ENCODE measurements at regions of chr5 and their contacts with region 1.

Region 1: GRCh38 chr5:133051580-133052332 is at the start of gene HSPA4:
- DNase-seq: peak; percentile 96 to 99 (median 98)
- H3K4me3 ChIP-seq: peak within 1 kb of the TSS; percentile 72 to 100 (median 98)
- H3K27ac ChIP-seq: peak within 1 kb of the TSS; percentile 96 to 100 (median 100)
- H3K27me3 ChIP-seq: no peaks in the 10 kb centered on the region
- CTCF ChIP-seq: peak in 15 of 56 donors; percentile 3 to 38 (median 13)
- total RNA-seq, gene HSPA4: 61.6 to 183 (median 97.3) TPM

Region 2: DNA sequence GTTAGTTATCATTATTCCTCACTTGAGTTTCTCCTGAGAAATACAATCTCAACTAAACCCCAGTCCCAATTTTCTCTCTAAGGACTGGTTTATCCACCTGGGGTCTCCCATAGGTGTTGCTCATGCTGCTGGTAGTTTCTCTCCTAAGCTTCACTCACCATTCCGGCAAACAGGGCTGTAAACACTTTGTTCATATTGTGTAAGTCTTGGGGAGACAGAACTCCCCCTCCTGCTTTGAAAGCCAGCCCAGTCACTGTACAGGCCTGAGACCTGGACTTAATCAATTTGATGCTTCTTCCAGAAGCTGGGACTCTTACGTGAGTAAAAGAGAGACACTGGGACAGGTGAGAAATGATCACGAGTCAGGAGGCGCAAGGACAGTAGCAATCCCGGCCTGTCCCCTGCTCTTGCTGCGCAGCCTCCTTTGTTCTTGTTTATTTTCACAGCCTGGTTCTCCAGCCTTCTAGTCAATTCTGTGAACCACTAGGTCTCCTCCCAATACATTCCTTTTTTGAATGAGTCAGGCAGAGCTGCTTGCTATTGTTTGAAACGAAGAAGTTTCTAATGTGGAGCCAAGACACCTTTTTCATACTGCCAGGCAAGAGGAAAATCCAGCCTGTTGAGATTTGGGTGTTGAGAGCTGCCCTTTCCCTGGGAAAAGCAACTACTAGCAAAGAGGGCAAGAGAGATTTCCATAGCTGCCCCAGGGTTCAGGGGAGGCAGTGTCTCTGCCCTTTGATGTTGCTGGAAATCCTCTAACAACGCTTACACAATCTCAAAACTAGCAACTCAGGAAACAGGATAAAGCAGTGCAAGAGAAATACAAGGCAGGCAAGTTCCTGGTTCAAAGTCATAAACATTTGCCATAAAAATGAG is 212.1 kb before region 1 on chr5:
- intact Hi-C with region 1: no loop called
- DNase-seq: no peak
- H3K4me3 ChIP-seq: no peak overlapping the region
- H3K27ac ChIP-seq: peak overlapping the region in 55 of 59 donors; percentile 11 to 89 (median 73)
- H3K27me3 ChIP-seq: no peaks in the 10 kb centered on the region
- CTCF ChIP-seq: no peak

Region 3: DNA sequence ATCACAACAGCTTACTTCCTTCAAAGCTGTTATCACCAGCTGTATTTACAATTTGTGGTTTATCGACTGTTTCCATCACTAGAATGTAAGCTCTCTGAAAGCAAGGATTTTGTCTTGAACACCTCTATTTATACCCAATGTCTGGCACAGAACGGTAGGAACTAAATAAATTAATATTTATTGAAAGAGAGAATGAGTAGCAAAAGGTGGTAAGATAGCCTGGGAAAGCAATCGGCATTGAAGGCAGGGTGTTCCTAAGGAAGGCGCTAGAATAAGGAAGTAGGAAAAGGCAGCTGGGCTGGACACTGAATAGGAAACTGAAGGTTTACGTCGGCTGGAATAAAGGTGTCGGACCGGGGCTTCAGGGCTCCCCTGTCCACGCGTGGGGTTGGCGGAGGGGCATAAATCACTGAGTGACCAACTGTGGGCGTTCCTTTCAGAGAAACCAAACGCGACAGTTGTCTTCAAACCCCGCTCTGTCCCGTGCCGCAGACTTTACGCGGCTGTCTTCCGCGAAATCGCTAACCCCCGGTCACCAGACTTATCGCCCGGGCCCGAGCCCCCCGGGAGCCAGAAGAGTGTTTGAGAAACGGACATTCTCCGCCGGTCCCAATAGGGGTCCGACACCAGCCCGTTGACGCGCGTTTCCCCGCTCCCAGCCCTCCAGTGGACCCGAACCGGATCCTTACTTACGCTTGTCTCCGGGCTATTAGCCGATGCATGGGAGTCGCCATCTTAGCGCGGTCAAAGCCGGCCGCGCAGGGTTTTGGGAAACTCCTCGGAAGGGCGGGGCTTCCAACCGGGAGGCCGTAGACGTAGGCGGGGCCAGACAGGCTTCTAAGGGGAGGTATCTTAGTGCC is 25.7 kb before region 1 on chr5 and contains the start of gene ZCCHC10:
- intact Hi-C with region 1: loop called in 1 of 2 experiments (anchors 1 kb)
- DNase-seq: peak; percentile 79 to 96 (median 92)
- H3K4me3 ChIP-seq: peak within 1 kb of the TSS; percentile 61 to 99 (median 91)
- H3K27ac ChIP-seq: peak within 1 kb of the TSS; percentile 39 to 98 (median 94)
- H3K27me3 ChIP-seq: no peaks in the 10 kb centered on the region
- CTCF ChIP-seq: peak in 2 of 56 donors; percentile 16 to 18
- total RNA-seq, gene ZCCHC10: 7.5 to 24.1 (median 14.4) TPM